ENCODE measurements at regions of chr6 and their contacts with region 1.

Region 1: DNA sequence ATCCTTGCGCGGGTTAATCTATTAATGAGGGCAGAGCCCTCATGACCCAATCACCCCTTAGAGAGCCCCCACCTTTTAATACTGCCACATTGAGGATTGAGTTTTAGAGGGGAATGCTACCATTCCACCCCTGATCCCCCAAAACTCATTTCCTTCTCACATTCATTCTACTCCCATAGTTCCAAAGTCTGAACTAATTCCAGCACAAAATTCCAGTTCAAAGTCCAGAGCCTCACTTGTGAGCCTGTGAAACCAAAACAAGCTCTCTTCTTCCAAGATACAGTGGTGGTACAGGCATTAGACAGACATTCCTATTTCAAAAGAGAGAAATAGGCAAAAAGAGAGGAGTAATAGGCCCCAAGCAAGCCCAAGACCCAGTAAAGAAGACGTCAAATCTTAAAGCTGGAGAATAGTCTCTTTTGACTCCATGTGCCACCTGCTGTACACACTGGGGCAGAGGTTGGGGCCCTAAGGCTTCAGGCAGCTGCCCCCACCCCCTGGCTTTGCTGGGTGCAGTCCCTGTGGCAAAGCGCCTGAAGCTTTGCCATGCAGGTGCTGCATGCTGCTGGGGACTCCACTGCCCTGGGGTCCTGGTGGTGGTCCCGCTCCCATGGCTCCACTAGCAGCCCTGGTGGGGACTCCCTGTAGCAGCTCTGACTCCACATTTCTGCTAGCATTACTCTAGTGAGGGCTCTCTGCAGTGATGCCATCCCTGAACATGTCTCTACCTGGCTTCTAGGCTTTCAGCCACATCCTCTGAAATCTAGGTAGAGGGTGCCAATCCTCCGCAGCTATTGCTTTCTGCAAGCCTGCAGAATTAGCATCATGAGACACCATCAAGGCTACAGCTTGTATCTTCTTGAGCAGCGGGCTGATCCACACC is 41.3 kb downstream of the RSPH3 start:
- DNase-seq: no peak
- CTCF ChIP-seq: peak; percentile 21

Region 2: GRCh38 chr6:158704181-158704822 is 254.4 kb before region 1 on chr6:
- CTCF ChIA-PET with region 1: interaction called, 13 read pairs
- POLR2A ChIA-PET with region 1: no interaction called
- DNase-seq: peak; percentile 91
- CTCF ChIP-seq: peak; percentile 99

Region 3: GRCh38 chr6:158793432-158793831 is 165.3 kb before region 1 on chr6:
- CTCF ChIA-PET with region 1: interaction called, 17 read pairs
- POLR2A ChIA-PET with region 1: no interaction called
- DNase-seq: peak; percentile 55
- CTCF ChIP-seq: peak; percentile 67

Region 4: GRCh38 chr6:159212028-159212427 is 253.3 kb after region 1 on chr6:
- CTCF ChIA-PET with region 1: no interaction called
- POLR2A ChIA-PET with region 1: no interaction called
- DNase-seq: no peak
- CTCF ChIP-seq: no peak